B cell (primary cell): ENCODE measurements at regions of chr1 and their contacts with region 1.

Region 1: DNA sequence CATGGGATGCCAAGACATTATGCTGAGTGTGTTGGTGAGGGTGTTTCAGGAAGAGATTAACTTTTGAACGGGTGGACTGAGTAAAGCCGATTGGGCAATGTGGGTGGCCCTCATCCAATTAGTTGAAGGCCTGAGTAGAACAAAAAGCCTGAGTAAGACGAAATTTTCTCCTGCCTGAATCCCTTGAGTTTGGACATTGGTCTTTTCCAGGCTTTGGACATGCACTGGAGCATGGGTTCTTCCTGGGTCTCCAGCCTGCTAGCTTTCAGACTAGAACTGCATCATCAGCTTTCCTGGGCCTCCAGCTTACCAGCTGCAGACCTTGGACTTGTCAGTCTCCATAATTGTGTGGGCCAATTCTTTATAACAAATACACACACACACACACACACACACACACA is 63.6 kb downstream of the NIBAN1 start:
- DNase-seq: no peak
- ATAC-seq: no peak
- H3K4me3 ChIP-seq: no peak overlapping the region
- H3K4me3 Mint-ChIP-seq: no peak overlapping the region
- H3K27ac ChIP-seq: no peak overlapping the region
- H3K27ac Mint-ChIP-seq: no peak overlapping the region
- H3K4me1 ChIP-seq: peaks cover 4 to 5% of the 10 kb centered on the region in 2 donors
- H3K4me1 Mint-ChIP-seq: peaks cover 6% of the 10 kb centered on the region
- H3K27me3 ChIP-seq: no peaks in the 10 kb centered on the region
- H3K27me3 Mint-ChIP-seq: no peaks in the 10 kb centered on the region
- CTCF ChIP-seq: no peak

Region 2: DNA sequence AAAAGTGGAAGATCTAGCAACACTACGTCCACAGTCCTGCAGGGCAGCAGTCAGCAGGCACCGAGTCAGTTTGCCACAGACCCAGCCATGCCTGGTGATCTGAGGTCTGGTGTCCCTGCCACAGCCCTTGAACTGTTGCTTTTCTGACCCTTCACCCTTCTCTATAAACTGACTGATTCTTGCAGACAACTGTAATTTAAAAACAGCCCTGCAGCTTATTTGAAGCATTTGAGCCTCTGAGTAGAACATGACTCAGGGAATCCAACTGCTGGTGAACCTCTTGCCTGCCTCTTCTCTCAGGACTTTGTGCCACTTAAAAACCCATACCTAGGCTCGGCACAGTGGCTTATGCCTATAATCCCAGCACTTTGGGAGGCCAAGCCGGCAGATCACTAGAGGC is 263.2 kb before region 1 on chr1:
- CTCF ChIA-PET with region 1: no interaction called
- POLR2A ChIA-PET with region 1: no interaction called
- intact Hi-C with region 1: no loop called
- DNase-seq: no peak
- ATAC-seq: no peak
- H3K4me3 ChIP-seq: no peak overlapping the region
- H3K4me3 Mint-ChIP-seq: no peak overlapping the region
- H3K27ac ChIP-seq: no peak overlapping the region
- H3K27ac Mint-ChIP-seq: no peak overlapping the region
- H3K4me1 ChIP-seq: no peaks in the 10 kb centered on the region
- H3K4me1 Mint-ChIP-seq: no peaks in the 10 kb centered on the region
- H3K27me3 ChIP-seq: peaks cover 0 to 6% (median 0%) of the 10 kb centered on the region in 4 experiments
- H3K27me3 Mint-ChIP-seq: peaks cover 24% of the 10 kb centered on the region
- CTCF ChIP-seq: no peak

Region 3: GRCh38 chr1:184973272-184974055 is 62.8 kb after region 1 on chr1:
- CTCF ChIA-PET with region 1: no interaction called
- POLR2A ChIA-PET with region 1: no interaction called
- intact Hi-C with region 1: loop called (anchors 10 kb)
- DNase-seq: peak; percentile 69
- ATAC-seq: peak; percentile 39
- H3K4me3 ChIP-seq: peak overlapping the region; percentile 57 to 85 (median 61)
- H3K4me3 Mint-ChIP-seq: peak overlapping the region; percentile 96
- H3K27ac ChIP-seq: peak overlapping the region; percentile 21 to 54
- H3K27ac Mint-ChIP-seq: peak overlapping the region; percentile 85
- H3K4me1 ChIP-seq: peaks cover 5 to 17% of the 10 kb centered on the region in 2 donors
- H3K4me1 Mint-ChIP-seq: peaks cover 40% of the 10 kb centered on the region
- H3K27me3 ChIP-seq: peaks cover 0 to 11% (median 9%) of the 10 kb centered on the region in 4 experiments
- H3K27me3 Mint-ChIP-seq: peaks cover 10% of the 10 kb centered on the region
- CTCF ChIP-seq: no peak